PC-3 (cell line): ENCODE measurements at regions of chr1 and their contacts with region 1.

Region 1: DNA sequence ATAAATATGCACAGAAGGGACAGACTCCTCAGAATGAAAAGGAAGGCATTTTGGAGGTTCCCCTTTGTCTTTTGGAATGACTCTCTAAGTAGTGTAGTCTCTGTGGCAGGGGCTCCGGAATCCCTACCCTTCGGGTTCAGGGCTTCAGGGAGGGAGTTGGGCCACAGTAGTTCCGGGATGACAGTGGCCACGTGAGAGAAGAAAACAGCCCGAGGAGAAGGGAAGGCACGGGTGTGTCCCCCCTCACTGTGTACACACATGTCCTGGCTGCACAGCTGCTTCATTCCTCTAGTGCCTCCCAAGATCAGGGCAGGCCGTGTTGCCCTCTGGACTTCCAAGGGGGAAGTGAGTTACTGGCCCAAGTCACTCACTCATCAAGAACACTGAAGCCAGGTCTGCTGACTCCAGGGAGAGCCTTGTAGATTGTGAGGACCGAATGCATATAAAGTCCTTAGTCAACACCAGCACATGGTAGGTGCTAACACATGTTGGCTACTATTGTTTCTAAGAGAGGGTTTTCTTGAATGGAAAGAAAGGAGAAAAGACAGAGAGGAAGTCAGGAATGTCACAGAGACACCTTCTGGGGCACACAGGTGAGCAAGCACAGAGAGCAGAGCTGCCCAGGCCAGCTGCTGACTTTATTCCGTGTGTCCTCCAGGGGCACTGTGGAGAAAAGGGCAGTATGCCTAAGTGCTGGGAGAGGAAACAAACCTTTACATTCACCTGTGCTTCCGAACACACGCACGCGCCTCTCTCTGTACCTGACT is 39.9 kb downstream of the LHX4 start:
- DNase-seq: peak; percentile 52
- ATAC-seq: peak; percentile 80
- H3K4me3 ChIP-seq: no peak overlapping the region
- H3K27ac ChIP-seq: no peak overlapping the region
- H3K4me1 ChIP-seq: no peaks in the 10 kb centered on the region
- H3K27me3 ChIP-seq: no peaks in the 10 kb centered on the region
- CTCF ChIP-seq: peak; percentile 60

Region 2: GRCh38 chr1:180415985-180416633 is 146.2 kb after region 1 on chr1:
- CTCF ChIA-PET with region 1: no interaction called
- POLR2A ChIA-PET with region 1: no interaction called
- intact Hi-C with region 1: loop called (anchors 5 kb)
- DNase-seq: peak; percentile 53
- ATAC-seq: peak; percentile 51; the same call in 1 of the 2 replicates
- H3K4me3 ChIP-seq: no peak overlapping the region
- H3K27ac ChIP-seq: no peak overlapping the region
- H3K4me1 ChIP-seq: no peaks in the 10 kb centered on the region
- H3K27me3 ChIP-seq: no peaks in the 10 kb centered on the region
- CTCF ChIP-seq: peak; percentile 75